PC-9 (cell line): ENCODE measurements at regions of chr5 and their contacts with region 1.

Region 1: GRCh38 chr5:45521067-45521466 is 175.1 kb downstream of the HCN1 start:
- DNase-seq: peak in 1 of 2 experiments; percentile 9
- H3K4me3 ChIP-seq: no peak overlapping the region
- H3K27ac ChIP-seq: no peak overlapping the region
- H3K4me1 ChIP-seq: no peaks in the 10 kb centered on the region
- H3K27me3 ChIP-seq: no peaks in the 10 kb centered on the region
- CTCF ChIP-seq: peak; percentile 39; the same call in 1 of the 2 replicates

Region 2: GRCh38 chr5:44952376-44952775 is 568.7 kb before region 1 on chr5:
- CTCF ChIA-PET with region 1: no interaction called
- POLR2A ChIA-PET with region 1: no interaction called
- intact Hi-C with region 1: loop called (anchors 5 kb)
- DNase-seq: peak; percentile 35 to 43
- H3K4me3 ChIP-seq: no peak overlapping the region
- H3K27ac ChIP-seq: no peak overlapping the region
- H3K4me1 ChIP-seq: no peaks in the 10 kb centered on the region
- H3K27me3 ChIP-seq: no peaks in the 10 kb centered on the region
- CTCF ChIP-seq: peak; percentile 92